ENCODE measurements at regions of chr2 and their contacts with region 1.

Region 1: GRCh38 chr2:233953087-233953801 is 36.1 kb downstream of the TRPM8 start:
- DNase-seq: no peak
- H3K4me3 ChIP-seq: no peak overlapping the region
- H3K27ac ChIP-seq: no peak overlapping the region
- H3K4me1 ChIP-seq: no peaks in the 10 kb centered on the region
- H3K27me3 ChIP-seq: peaks cover 4% of the 10 kb centered on the region; the same call in 1 of the 2 replicates
- CTCF ChIP-seq: no peak

Region 2: GRCh38 chr2:235201762-235202161 is 1248.5 kb after region 1 on chr2:
- CTCF ChIA-PET with region 1: interaction called, 14 read pairs
- POLR2A ChIA-PET with region 1: no interaction called
- intact Hi-C with region 1: no loop called
- DNase-seq: peak in 1 of 2 experiments; percentile 28
- H3K4me3 ChIP-seq: no peak overlapping the region
- H3K27ac ChIP-seq: no peak overlapping the region
- H3K4me1 ChIP-seq: no peaks in the 10 kb centered on the region
- H3K27me3 ChIP-seq: no peaks in the 10 kb centered on the region; the same call in 1 of the 2 replicates
- CTCF ChIP-seq: no peak

Region 3: GRCh38 chr2:235806986-235807750 is 1853.9 kb after region 1 on chr2:
- CTCF ChIA-PET with region 1: no interaction called
- POLR2A ChIA-PET with region 1: interaction called, 17 read pairs
- intact Hi-C with region 1: no loop called
- DNase-seq: no peak
- H3K4me3 ChIP-seq: no peak overlapping the region
- H3K27ac ChIP-seq: no peak overlapping the region
- H3K4me1 ChIP-seq: no peaks in the 10 kb centered on the region
- H3K27me3 ChIP-seq: no peaks in the 10 kb centered on the region
- CTCF ChIP-seq: no peak